ENCODE measurements at regions of chr1 and their contacts with region 1.

Region 1: GRCh38 chr1:173867753-173868265 is at the start of gene GAS5:
- DNase-seq: peak; percentile 100
- H3K4me3 ChIP-seq: peak within 1 kb of the TSS; percentile 75 to 85 (median 80)
- H3K27ac ChIP-seq: peak within 1 kb of the TSS; percentile 87
- H3K4me1 ChIP-seq: peaks cover 15% of the 10 kb centered on the region
- H3K27me3 ChIP-seq: no peaks in the 10 kb centered on the region
- CTCF ChIP-seq: no peak
- total RNA-seq, gene GAS5: 396 to 722 TPM

Region 2: GRCh38 chr1:173914366-173914871 is 46.6 kb after region 1 on chr1:
- CTCF ChIA-PET with region 1: no interaction called
- dilution Hi-C with region 1: no loop called
- in situ Hi-C with region 1: no loop called
- intact Hi-C with region 1: loop called (anchors 5 kb)
- DNase-seq: peak; percentile 28
- H3K4me3 ChIP-seq: no peak overlapping the region
- H3K27ac ChIP-seq: no peak overlapping the region
- H3K4me1 ChIP-seq: no peaks in the 10 kb centered on the region
- H3K27me3 ChIP-seq: no peaks in the 10 kb centered on the region
- CTCF ChIP-seq: peak; percentile 70 to 93

Region 3: DNA sequence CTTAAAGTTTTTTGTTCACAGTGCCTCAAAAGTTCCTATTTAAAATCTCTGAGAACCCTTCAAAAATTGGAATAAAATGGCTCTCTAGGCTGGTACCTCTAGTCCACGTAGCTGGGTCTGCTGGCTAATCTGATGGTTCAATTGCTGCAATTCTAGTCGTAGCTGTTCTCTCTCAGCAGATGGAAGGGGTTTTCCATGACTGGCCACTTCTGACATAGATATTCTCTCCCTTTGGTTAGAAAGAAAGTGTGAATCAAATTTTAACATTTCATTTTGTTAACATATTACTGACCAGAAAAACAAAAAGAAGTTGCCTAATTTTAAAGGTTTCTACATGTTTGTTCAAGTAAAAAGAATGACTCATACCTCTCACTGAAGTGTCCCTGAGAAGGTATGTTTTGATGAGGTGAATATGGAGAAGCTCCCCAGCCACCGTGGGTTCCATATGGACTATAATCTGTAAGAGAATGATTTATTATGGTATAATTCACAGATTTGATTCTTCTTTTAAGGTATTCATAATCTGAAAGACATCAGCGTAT is 78.6 kb after region 1 on chr1:
- CTCF ChIA-PET with region 1: no interaction called
- dilution Hi-C with region 1: no loop called
- in situ Hi-C with region 1: no loop called
- intact Hi-C with region 1: loop called (anchors 2 kb)
- DNase-seq: peak; percentile 79
- H3K4me3 ChIP-seq: no peak overlapping the region
- H3K27ac ChIP-seq: peak overlapping the region; percentile 25
- H3K4me1 ChIP-seq: peaks cover 7% of the 10 kb centered on the region
- H3K27me3 ChIP-seq: no peaks in the 10 kb centered on the region
- CTCF ChIP-seq: no peak

Region 4: GRCh38 chr1:174022080-174022975 is 154.5 kb after region 1 on chr1 and contains the start of gene RC3H1:
- CTCF ChIA-PET with region 1: no interaction called
- dilution Hi-C with region 1: no loop called
- in situ Hi-C with region 1: no loop called
- intact Hi-C with region 1: loop called (anchors 5 kb)
- DNase-seq: peak; percentile 89
- H3K4me3 ChIP-seq: peak within 1 kb of the TSS; percentile 87 to 98 (median 93)
- H3K27ac ChIP-seq: peak within 1 kb of the TSS; percentile 83
- H3K4me1 ChIP-seq: peaks cover 26% of the 10 kb centered on the region
- H3K27me3 ChIP-seq: no peaks in the 10 kb centered on the region
- CTCF ChIP-seq: no peak
- total RNA-seq, gene RC3H1: 22.0 to 36.5 TPM

Region 5: DNA sequence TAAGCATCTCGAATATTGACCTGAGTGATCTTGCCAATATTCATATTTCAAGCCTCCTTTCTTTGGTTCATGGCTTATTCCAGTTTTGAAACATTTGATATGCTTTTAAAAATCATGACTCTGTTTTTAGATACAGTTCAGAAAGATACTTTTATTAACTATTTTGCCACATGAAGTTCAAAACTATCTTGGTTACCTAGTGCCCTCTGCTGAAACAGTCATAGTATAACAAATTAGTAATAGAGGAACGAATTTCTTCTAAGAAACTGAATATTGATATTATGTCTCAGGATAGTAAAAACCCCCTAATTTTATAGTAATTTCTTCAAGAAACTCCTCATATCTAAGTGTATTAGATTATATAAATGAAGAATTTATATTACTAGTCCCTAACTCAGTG is 206.9 kb after region 1 on chr1:
- CTCF ChIA-PET with region 1: no interaction called
- dilution Hi-C with region 1: no loop called
- in situ Hi-C with region 1: no loop called
- intact Hi-C with region 1: loop called (anchors 2 kb)
- DNase-seq: no peak
- H3K4me3 ChIP-seq: no peak overlapping the region
- H3K27ac ChIP-seq: no peak overlapping the region
- H3K4me1 ChIP-seq: no peaks in the 10 kb centered on the region
- H3K27me3 ChIP-seq: no peaks in the 10 kb centered on the region
- CTCF ChIP-seq: peak; percentile 28 to 42

Region 6: GRCh38 chr1:174159252-174160108 is 291.7 kb after region 1 on chr1 and contains the start of gene RABGAP1L:
- CTCF ChIA-PET with region 1: no interaction called
- dilution Hi-C with region 1: no loop called
- in situ Hi-C with region 1: no loop called
- intact Hi-C with region 1: loop called (anchors 2 kb)
- DNase-seq: peak; percentile 94
- H3K4me3 ChIP-seq: peak within 1 kb of the TSS; percentile 84 to 94 (median 91)
- H3K27ac ChIP-seq: peak within 1 kb of the TSS; percentile 78
- H3K4me1 ChIP-seq: peaks cover 34% of the 10 kb centered on the region
- H3K27me3 ChIP-seq: no peaks in the 10 kb centered on the region
- CTCF ChIP-seq: no peak
- total RNA-seq, gene RABGAP1L: 31.9 to 47.5 TPM

Region 7: GRCh38 chr1:174217787-174218574 is 350.2 kb after region 1 on chr1:
- CTCF ChIA-PET with region 1: no interaction called
- dilution Hi-C with region 1: no loop called
- in situ Hi-C with region 1: no loop called
- intact Hi-C with region 1: loop called (anchors 5 kb)
- DNase-seq: peak; percentile 27
- H3K4me3 ChIP-seq: no peak overlapping the region
- H3K27ac ChIP-seq: no peak overlapping the region
- H3K4me1 ChIP-seq: peaks cover 15% of the 10 kb centered on the region
- H3K27me3 ChIP-seq: no peaks in the 10 kb centered on the region
- CTCF ChIP-seq: peak; percentile 72 to 86

Measured in mammary epithelial cell (primary cell).